ENCODE measurements at regions of chr10 and their contacts with region 1.

Region 1: GRCh38 chr10:31864834-31865518 is 63.7 kb downstream of the ARHGAP12 start:
- DNase-seq: no peak
- ATAC-seq: peak; percentile 67
- H3K4me3 ChIP-seq: no peak overlapping the region
- H3K4me1 ChIP-seq: peaks cover 18% of the 10 kb centered on the region
- CTCF ChIP-seq: no peak

Region 2: DNA sequence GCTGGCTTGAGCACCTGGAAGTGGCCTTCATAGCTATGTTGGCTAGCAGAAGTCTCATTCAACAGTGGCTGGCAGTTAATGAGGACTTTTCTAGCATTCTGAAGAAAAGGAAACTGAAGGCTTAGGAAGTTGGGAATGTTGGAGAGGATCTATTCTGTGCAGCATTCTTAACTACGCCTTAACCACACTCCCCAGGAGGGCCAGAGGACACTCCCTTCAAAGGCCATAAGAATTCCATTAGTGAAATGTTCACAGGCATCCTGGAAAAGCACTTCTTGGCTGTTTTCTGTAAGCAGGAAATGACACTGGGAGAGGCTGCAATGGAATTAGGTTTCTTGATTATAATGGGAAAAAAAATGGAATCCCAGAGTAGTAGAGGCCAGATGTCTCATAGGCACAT is 125.3 kb before region 1 on chr10:
- intact Hi-C with region 1: no loop called
- DNase-seq: no peak
- ATAC-seq: no peak
- H3K4me3 ChIP-seq: no peak overlapping the region
- H3K4me1 ChIP-seq: no peaks in the 10 kb centered on the region
- CTCF ChIP-seq: no peak

Region 3: DNA sequence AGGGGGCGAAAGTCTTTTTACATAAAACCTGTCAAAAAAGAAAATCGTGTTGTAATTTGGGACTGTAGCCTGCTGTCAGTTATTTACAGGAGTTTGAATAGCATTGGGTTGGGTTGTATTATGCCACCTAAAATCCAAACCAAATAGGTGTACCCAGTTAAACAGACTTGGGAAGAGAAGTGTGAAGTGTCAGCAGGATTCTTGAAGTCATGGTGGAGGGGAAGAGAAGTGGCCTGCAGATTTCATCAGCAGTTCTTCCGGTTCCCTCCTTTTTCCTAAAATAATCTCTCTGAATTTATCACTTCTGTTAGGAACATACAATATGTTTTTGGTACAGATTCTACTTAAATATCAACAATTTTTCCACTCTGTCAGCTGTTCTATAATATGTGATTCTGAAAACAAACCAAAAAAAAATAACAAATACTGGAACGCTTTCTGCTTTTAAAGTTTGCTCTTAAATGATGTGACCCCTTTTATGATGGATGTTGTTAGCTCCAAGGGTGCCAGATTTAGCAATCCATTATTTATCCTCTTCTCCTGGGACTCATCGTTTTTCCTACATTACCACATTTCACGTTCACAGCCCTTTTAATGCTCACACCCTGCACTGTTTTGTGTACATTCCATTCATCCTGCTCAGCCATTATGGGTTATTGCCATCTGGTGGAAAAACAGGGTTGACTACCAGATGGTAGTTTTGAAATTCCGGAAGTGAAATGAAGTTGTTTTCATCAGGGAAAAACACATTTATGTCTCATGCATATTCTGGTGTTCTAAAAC is 82.4 kb after region 1 on chr10:
- intact Hi-C with region 1: loop called in 1 of 2 experiments (anchors 5 kb)
- DNase-seq: peak in 1 of 3 donors; percentile 53
- ATAC-seq: peak; percentile 95
- H3K4me3 ChIP-seq: no peak overlapping the region
- H3K4me1 ChIP-seq: peaks cover 8% of the 10 kb centered on the region
- CTCF ChIP-seq: no peak